ENCODE measurements at regions of chr1 and their contacts with region 1.

Region 1: DNA sequence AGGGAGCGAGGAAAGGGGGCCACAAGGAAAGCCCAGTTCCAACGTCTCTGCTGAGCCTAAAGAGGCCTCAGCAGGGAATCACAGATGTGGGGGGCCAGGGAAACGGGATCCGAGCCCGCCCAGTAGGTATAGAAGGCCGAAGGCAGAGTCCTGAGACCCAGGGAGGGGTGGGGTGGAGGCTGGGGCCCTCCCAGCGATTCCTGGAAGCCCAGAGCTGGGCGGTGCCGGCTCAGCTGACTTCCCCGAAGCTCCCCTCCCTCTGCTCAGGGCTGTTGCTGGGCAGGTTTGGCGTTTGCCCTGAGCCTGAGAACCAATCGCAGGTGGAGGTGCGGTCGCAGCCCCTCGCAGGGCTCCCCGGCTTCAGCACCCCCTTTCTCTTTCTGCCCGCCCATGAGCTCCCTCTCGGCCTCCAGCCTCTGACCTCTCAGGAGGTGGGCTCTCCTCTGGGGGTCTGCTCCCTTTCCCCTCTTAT is 12.8 kb downstream of the ADAMTSL4 start:
- DNase-seq: peak; percentile 85
- CTCF ChIP-seq: no peak

Region 2: GRCh38 chr1:150477733-150478132 is 84.3 kb before region 1 on chr1:
- CTCF ChIA-PET with region 1: no interaction called
- POLR2A ChIA-PET with region 1: no interaction called
- DNase-seq: no peak
- CTCF ChIP-seq: no peak

Region 3: DNA sequence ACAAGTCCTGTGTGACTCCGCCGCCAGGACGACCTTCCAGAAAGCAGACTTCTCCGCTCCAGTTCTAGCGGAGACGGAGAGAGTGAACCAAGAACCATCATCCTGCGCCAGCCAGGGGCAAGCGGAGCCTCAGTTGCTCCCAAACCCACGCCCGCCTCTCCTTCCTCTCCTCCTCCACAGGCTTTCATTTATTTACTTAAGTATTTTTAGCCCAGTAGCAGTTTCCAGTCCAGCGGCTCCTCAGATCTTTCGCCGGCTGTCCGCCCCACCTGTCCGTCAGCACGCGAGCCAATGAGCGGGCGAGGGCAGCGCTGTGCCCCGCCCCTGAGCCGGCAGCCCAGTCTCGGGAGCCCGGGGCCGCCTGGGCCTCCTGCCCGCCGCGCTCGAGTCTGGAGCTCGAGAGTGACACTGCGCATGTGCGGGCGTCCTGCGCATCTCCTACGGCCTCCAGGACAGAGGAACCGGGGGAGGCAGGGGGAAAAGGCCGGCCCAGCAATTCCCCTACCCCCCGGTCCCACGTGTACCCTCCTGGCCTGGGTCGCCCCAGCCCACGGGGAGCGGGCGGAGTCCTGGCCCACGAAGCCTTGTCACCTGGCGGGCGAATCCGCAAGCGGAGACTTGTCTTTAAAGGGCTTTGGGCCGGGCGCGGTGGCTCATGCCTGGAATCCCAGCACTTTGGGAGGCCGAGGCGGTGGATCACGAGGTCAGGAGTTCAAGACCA is 46.5 kb before region 1 on chr1 and contains the start of gene FALEC:
- CTCF ChIA-PET with region 1: interaction called, 23 read pairs
- POLR2A ChIA-PET with region 1: interaction called, 3 read pairs
- DNase-seq: peak; percentile 99
- CTCF ChIP-seq: no peak

Region 4: GRCh38 chr1:150548632-150549495 is 13.1 kb before region 1 on chr1 and contains the start of gene ADAMTSL4:
- CTCF ChIA-PET with region 1: interaction called, 100 read pairs
- POLR2A ChIA-PET with region 1: interaction called, 6 read pairs
- DNase-seq: peak; percentile 70
- CTCF ChIP-seq: no peak

Region 5: GRCh38 chr1:150629115-150629928 is 67.3 kb after region 1 on chr1 and contains the start of gene ENSA:
- CTCF ChIA-PET with region 1: interaction called, 33 read pairs
- POLR2A ChIA-PET with region 1: interaction called, 14 read pairs
- DNase-seq: peak; percentile 94
- CTCF ChIP-seq: no peak

Region 6: GRCh38 chr1:150925816-150926741 is 364.1 kb after region 1 on chr1 and contains the start of gene SETDB1:
- CTCF ChIA-PET with region 1: interaction called, 13 read pairs
- POLR2A ChIA-PET with region 1: no interaction called
- DNase-seq: peak; percentile 92
- CTCF ChIP-seq: peak; percentile 23

Measured in GM10248 (cell line).